ENCODE measurements at regions of chr9 and their contacts with region 1.

Region 1: DNA sequence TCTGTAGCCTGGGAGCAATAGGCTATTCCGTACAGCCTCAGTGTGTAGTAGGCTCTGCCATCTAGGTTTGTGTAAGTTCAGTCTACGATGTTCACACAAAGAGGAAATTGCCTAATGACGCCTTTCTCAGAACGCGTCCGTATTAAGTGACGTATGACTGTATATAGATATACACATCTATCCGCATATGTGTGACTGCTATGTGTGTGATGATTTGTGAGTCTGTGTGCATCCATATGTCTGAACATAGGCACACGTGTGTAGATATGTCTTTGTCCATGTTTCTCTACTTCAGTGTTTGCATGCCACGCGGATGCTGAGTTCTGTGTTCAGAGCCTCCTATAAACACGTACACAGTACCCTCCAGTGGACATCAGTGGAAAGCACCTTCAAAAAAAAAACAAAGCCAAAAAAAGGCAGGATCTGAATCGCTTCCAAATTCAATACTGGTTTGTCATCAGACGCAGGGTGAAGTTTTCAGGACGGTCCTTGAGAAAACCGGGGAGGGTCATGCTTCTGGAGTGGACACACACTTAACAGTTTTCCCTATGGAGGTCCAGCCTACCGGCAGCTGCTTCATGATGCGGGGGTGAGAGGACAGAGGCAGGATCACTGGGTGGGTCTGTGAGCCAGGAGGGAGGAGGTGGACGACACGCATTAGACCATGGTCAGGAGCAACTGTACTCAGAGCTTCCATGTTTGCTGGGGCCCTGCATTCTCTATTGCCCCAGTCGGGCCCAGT is 29.5 kb upstream of the ALDH1B1 start:
- DNase-seq: no peak
- H3K4me3 ChIP-seq: no peak overlapping the region
- CTCF ChIP-seq: peak; percentile 59

Region 2: GRCh38 chr9:37827473-37828165 is 535.4 kb before region 1 on chr9:
- CTCF ChIA-PET with region 1: no interaction called
- POLR2A ChIA-PET with region 1: no interaction called
- DNase-seq: no peak
- H3K4me3 ChIP-seq: no peak overlapping the region
- CTCF ChIP-seq: no peak

Region 3: DNA sequence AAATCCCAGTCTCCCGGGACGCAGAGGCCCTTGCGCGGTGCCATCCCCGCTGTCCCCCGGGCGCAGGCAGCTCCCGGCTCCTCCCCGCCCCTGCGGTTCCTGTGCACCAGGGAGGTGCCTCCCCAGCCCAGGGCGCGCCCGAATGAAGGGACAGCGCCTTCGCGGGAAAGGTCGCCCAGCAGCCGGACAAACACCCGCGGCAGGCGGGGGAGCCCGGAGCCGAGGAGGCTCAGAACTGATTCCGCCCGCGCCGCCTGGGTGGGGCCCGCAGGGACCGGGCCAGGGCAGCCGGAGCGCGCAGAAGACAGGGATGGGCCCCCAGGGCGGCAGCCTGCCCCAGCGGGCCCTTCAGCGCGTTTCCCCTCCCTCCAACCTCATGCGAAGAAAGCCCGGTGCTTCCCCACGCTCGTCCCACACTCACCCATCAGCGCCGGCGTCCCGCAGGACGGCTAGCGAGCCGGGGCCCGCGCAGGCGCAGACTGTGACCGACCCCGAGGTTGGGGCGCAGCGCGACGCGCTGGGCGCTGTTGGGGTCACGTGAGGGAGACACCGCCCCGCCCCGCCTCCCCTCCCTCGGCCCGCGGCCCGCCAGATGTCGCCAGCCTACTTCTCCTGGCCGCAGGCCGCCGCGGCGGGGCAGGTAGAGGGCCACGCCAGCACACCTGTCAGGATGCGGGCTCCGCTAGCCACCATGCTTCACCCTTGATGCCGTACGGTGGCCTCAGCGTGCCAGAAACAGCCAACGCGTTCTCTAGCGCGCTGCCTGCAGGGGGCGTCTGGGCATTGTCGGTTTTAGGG is 459.2 kb before region 1 on chr9 and contains the start of gene SLC25A51:
- CTCF ChIA-PET with region 1: interaction called, 10 read pairs
- POLR2A ChIA-PET with region 1: no interaction called
- DNase-seq: no peak
- H3K4me3 ChIP-seq: peak within 1 kb of the TSS; percentile 83
- CTCF ChIP-seq: peak; percentile 99

Region 4: GRCh38 chr9:38251036-38251860 is 111.8 kb before region 1 on chr9:
- CTCF ChIA-PET with region 1: no interaction called
- POLR2A ChIA-PET with region 1: no interaction called
- DNase-seq: no peak
- H3K4me3 ChIP-seq: no peak overlapping the region
- CTCF ChIP-seq: no peak

Measured in AG04449 (cell line).